AG04450 (cell line): ENCODE measurements at regions of chr11 and their contacts with region 1.

Region 1: GRCh38 chr11:29448246-29448877 is 568.5 kb downstream of the KCNA4 start:
- DNase-seq: no peak
- H3K4me3 ChIP-seq: no peak overlapping the region
- H3K27ac ChIP-seq: no peak overlapping the region
- H3K27me3 ChIP-seq: no peaks in the 10 kb centered on the region
- CTCF ChIP-seq: peak; percentile 61

Region 2: GRCh38 chr11:29432719-29433325 is 15.5 kb before region 1 on chr11:
- CTCF ChIA-PET with region 1: interaction called, 18 read pairs
- POLR2A ChIA-PET with region 1: no interaction called
- DNase-seq: no peak
- H3K4me3 ChIP-seq: no peak overlapping the region
- H3K27ac ChIP-seq: no peak overlapping the region
- H3K27me3 ChIP-seq: no peaks in the 10 kb centered on the region
- CTCF ChIP-seq: peak; percentile 57